Endothelial cell of umbilical vein (primary cell): ENCODE measurements at regions of chrX and their contacts with region 1.

Region 1: GRCh38 chrX:48083212-48083611 is 11.8 kb upstream of the ZNF630 start:
- DNase-seq: peak; percentile 53
- H3K4me3 ChIP-seq: no peak overlapping the region
- H3K27ac ChIP-seq: no peak overlapping the region
- H3K4me1 ChIP-seq: no peaks in the 10 kb centered on the region
- H3K27me3 ChIP-seq: peaks cover 0 to 1% of the 10 kb centered on the region in 2 experiments
- CTCF ChIP-seq: peak; percentile 37 to 39
- POLR2A ChIP-seq: no peak

Region 2: DNA sequence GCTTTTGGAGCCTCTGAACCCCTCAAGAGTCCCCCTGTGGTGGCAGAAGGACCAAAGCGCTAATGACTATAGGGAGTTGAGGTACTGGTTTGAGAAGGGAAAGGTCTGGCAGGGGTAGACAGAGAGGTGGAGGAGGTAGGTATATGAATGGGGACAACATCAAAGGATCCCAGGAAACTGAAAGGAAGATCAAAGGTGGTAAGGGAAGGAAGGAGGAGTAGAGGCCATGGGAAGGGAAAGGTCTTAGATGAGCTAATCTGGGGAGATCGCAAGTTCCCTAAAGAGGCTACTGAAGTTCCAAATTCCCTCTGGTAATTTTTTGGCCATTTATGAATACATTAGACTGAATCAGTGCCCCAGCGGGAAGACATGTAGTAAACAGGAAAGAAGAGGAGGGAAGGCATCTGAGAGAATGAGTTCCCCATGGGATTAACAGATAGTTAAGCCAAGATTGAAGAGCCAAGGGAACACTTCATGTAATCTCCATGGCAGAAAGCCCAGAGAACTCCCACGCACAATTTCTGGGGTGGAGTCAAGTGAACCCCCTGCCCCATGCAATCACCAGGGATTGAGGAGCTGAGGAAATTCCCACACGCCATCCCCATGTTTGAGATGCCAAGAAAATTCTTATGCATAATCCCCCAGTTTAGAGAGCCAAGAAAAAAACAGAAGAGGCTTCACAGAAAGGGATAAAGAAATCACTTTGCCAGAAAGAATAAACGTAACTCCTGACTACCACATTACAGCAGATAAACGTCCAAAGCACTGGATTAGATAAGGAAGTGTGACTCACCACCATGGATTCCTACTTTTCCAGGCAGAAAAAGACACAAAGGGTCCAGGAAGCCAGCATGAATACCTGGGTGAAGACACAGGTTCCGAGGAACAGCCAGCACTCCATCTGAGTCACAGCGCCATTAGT is 37.5 kb before region 1 on chrX:
- CTCF ChIA-PET with region 1: no interaction called
- POLR2A ChIA-PET with region 1: no interaction called
- dilution Hi-C with region 1: no loop called
- intact Hi-C with region 1: no loop called
- DNase-seq: peak; percentile 43
- H3K4me3 ChIP-seq: no peak overlapping the region
- H3K27ac ChIP-seq: no peak overlapping the region
- H3K4me1 ChIP-seq: peaks cover 13% of the 10 kb centered on the region
- H3K27me3 ChIP-seq: no peaks in the 10 kb centered on the region
- CTCF ChIP-seq: no peak
- POLR2A ChIP-seq: no peak

Region 3: DNA sequence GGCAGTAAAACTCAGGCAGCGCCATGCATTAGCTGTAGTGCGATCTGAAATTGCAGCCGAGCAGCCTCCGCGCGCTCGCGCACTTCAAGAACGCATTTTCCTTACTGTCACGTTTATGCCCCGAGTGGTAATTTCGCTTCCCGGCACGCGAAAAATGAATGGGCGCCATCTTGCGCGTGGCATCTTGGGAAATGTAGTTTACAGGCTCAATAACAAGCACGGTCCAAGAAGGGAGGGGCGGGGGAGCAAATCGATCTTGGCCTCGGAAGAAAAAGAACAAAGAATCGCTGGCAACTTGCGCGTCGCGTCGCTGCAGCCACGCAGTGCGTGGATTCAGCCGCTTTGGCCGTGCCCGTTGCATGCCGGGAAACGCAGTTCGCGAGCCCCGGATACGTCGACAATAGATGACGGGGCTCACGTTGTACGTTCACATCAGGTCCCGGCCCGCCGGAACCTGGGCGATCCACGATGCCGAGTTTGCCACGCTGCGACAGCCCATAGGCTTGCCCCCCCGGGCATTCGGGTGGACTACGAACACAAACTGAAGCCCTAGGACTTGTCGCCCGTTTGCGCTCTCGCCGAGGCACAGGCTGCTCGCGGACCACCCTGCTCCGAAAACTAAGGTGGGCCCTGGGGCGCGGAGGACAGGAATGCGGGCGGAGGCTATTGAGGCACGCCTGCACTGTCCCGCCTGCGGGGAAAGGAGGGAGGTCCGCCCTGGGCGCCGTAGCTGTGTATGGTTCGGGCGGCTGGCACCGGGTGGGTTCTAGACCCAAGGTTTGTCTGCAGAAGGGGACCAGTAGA is 392.8 kb after region 1 on chrX and contains the start of gene FTSJ1:
- CTCF ChIA-PET with region 1: interaction called, 4 read pairs
- POLR2A ChIA-PET with region 1: no interaction called
- dilution Hi-C with region 1: no loop called
- intact Hi-C with region 1: loop called (anchors 5 kb)
- DNase-seq: peak; percentile 92
- H3K4me3 ChIP-seq: peak within 1 kb of the TSS; percentile 76 to 91 (median 88)
- H3K27ac ChIP-seq: peak within 1 kb of the TSS; percentile 56
- H3K4me1 ChIP-seq: peaks cover 6% of the 10 kb centered on the region
- H3K27me3 ChIP-seq: no peaks in the 10 kb centered on the region
- CTCF ChIP-seq: no peak
- POLR2A ChIP-seq: peak; percentile 68
- total RNA-seq, gene FTSJ1: 52.9 and 59.9 TPM in 2 replicates

Region 4: DNA sequence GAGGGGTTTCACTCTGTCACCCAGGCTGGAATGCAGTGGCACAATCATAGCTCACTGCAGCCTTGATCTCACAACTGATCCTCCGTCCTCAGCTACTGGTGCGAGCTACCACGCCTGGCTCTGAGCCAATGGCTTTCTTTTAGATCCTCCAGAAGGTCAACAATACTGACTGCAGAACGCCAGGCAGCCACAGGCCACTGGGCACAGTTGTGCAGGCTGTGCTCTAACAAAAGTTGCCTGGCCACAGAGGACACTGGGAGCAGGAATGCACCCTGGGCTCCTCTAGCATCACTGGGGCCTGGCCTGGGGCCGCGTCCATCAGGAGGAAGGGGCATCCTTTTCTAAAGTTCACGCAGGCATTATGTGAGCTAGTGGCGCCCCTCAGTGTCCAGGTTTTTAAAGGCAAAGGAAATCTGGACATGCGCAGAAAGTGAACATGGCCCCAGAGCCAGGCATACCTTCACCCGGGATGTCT is 410.7 kb after region 1 on chrX:
- CTCF ChIA-PET with region 1: interaction called, 40 read pairs
- POLR2A ChIA-PET with region 1: no interaction called
- dilution Hi-C with region 1: no loop called
- intact Hi-C with region 1: loop called (anchors 1 kb)
- DNase-seq: peak; percentile 35
- H3K4me3 ChIP-seq: no peak overlapping the region
- H3K27ac ChIP-seq: no peak overlapping the region
- H3K4me1 ChIP-seq: peaks cover 14% of the 10 kb centered on the region
- H3K27me3 ChIP-seq: no peaks in the 10 kb centered on the region
- CTCF ChIP-seq: peak; percentile 18 to 20
- POLR2A ChIP-seq: no peak

Region 5: DNA sequence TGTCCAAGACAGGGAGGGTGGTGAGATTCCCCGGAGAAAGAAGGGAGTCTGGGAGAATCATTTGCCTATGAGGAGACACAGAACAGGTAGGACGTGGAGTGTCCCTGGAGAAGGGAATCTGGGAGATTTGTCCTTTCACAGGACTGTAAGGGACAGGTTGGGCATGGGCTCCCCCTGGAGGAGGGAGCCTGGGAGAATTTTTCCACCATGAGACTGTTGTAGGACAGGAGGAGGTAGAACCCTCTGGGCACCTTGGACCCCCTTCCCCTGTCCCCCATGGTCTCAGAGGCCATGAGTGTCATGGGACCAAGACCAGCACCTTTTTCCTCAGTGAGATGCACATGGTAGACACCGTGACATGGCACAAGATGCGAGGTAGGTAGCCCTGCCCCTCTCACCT is 428.3 kb after region 1 on chrX:
- CTCF ChIA-PET with region 1: no interaction called
- POLR2A ChIA-PET with region 1: no interaction called
- dilution Hi-C with region 1: no loop called
- intact Hi-C with region 1: loop called (anchors 1 kb)
- DNase-seq: peak; percentile 14
- H3K4me3 ChIP-seq: no peak overlapping the region
- H3K27ac ChIP-seq: no peak overlapping the region
- H3K4me1 ChIP-seq: no peaks in the 10 kb centered on the region
- H3K27me3 ChIP-seq: no peaks in the 10 kb centered on the region
- CTCF ChIP-seq: peak in 1 of 2 donors; percentile 42
- POLR2A ChIP-seq: no peak